CD14-positive monocyte (primary cell): ENCODE measurements at regions of chr10 and their contacts with region 1.

Region 1: GRCh38 chr10:78657163-78657861 is 411.5 kb upstream of the ZMIZ1 start:
- DNase-seq: peak; percentile 32 to 49 (median 46)
- H3K4me3 ChIP-seq: no peak overlapping the region
- H3K4me3 Mint-ChIP-seq: no peak overlapping the region
- H3K27ac ChIP-seq: no peak overlapping the region
- H3K27ac Mint-ChIP-seq: no peak overlapping the region
- H3K4me1 ChIP-seq: no peaks in the 10 kb centered on the region
- H3K4me1 Mint-ChIP-seq: peaks cover 1% of the 10 kb centered on the region
- H3K27me3 ChIP-seq: peaks cover 0 to 2% of the 10 kb centered on the region in 2 donors
- H3K27me3 Mint-ChIP-seq: peaks cover 2 to 6% (median 4%) of the 10 kb centered on the region in 3 donors
- CTCF ChIP-seq: peak; percentile 86

Region 2: GRCh38 chr10:78047314-78047891 is 609.9 kb before region 1 on chr10:
- intact Hi-C with region 1: loop called (anchors 5 to 10 kb)
- DNase-seq: peak; percentile 54 to 65 (median 65)
- H3K4me3 ChIP-seq: no peak overlapping the region
- H3K4me3 Mint-ChIP-seq: peak overlapping the region in 1 of 2 donors; percentile 20
- H3K27ac ChIP-seq: no peak overlapping the region
- H3K27ac Mint-ChIP-seq: peak overlapping the region in 1 of 7 donors; percentile 57
- H3K4me1 ChIP-seq: peaks cover 0 to 8% of the 10 kb centered on the region in 2 donors
- H3K4me1 Mint-ChIP-seq: peaks cover 19% of the 10 kb centered on the region
- H3K27me3 ChIP-seq: no peaks in the 10 kb centered on the region
- H3K27me3 Mint-ChIP-seq: peaks cover 0 to 2% (median 1%) of the 10 kb centered on the region in 3 donors
- CTCF ChIP-seq: peak; percentile 90

Region 3: DNA sequence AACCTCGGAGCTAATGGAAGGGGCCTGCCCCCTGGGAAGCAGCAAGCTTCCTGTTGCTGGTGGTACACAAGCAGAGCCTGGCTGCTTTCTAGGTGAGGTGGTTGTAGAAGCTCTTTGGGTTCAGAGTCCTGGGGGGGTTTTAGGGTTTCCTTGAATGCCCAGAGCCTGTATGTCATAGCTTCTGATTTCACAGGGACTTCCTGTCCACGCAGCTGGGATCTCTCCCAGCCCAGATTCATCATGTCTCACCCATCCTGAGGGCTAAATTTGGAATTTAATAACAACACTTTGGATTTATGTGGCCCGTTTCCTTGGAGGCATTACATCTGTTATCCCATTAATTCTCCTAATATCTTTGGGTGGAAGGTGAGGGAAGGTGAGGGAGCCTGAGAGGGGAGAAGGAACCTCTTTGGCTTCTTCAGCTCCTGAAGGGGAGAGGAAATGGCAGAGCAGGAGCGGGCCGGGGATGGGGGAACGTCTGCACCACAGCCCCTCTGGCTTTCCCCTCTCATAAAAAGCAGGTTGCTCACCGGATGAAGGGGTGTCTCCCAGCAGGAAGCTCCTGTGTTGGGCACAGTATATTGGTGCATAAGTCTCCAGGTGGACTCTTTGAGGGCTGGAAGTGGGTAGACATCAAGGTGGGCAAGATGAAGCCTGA is 604.0 kb before region 1 on chr10:
- intact Hi-C with region 1: loop called (anchors 5 to 10 kb)
- DNase-seq: no peak
- H3K4me3 ChIP-seq: no peak overlapping the region
- H3K4me3 Mint-ChIP-seq: no peak overlapping the region
- H3K27ac ChIP-seq: no peak overlapping the region
- H3K27ac Mint-ChIP-seq: no peak overlapping the region
- H3K4me1 ChIP-seq: peaks cover 0 to 4% of the 10 kb centered on the region in 2 donors
- H3K4me1 Mint-ChIP-seq: peaks cover 7% of the 10 kb centered on the region
- H3K27me3 ChIP-seq: no peaks in the 10 kb centered on the region
- H3K27me3 Mint-ChIP-seq: peaks cover 0 to 2% (median 2%) of the 10 kb centered on the region in 3 donors
- CTCF ChIP-seq: no peak

Region 4: DNA sequence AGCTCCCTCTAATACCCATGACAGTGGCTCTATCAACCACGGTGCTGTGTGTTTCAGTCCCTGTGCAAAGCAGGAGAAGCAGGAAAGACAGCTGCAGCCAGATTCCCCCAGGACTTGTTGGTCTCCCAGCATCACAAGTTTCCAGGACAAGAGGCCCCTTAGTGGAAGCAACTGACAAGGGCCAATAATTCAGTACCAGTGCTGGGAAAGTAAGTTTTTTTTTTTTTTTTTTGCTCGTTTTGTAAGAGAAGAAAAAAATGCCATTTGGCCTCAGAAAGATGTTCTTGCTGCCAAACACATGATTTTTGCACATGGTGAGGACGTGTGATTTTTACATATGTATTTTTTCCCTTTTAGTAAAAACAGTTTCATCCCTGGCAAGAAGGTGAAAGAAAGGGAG is 127.2 kb after region 1 on chr10:
- intact Hi-C with region 1: loop called in 1 of 2 experiments (anchors 10 kb)
- DNase-seq: no peak
- H3K4me3 ChIP-seq: no peak overlapping the region
- H3K4me3 Mint-ChIP-seq: no peak overlapping the region
- H3K27ac ChIP-seq: no peak overlapping the region
- H3K27ac Mint-ChIP-seq: no peak overlapping the region
- H3K4me1 ChIP-seq: no peaks in the 10 kb centered on the region
- H3K4me1 Mint-ChIP-seq: no peaks in the 10 kb centered on the region
- H3K27me3 ChIP-seq: no peaks in the 10 kb centered on the region
- H3K27me3 Mint-ChIP-seq: peaks cover 6 to 13% (median 7%) of the 10 kb centered on the region in 3 donors
- CTCF ChIP-seq: no peak